Posterior cingulate gyrus (tissue), 11 donors: ENCODE measurements at regions of chr9 and their contacts with region 1.

Region 1: DNA sequence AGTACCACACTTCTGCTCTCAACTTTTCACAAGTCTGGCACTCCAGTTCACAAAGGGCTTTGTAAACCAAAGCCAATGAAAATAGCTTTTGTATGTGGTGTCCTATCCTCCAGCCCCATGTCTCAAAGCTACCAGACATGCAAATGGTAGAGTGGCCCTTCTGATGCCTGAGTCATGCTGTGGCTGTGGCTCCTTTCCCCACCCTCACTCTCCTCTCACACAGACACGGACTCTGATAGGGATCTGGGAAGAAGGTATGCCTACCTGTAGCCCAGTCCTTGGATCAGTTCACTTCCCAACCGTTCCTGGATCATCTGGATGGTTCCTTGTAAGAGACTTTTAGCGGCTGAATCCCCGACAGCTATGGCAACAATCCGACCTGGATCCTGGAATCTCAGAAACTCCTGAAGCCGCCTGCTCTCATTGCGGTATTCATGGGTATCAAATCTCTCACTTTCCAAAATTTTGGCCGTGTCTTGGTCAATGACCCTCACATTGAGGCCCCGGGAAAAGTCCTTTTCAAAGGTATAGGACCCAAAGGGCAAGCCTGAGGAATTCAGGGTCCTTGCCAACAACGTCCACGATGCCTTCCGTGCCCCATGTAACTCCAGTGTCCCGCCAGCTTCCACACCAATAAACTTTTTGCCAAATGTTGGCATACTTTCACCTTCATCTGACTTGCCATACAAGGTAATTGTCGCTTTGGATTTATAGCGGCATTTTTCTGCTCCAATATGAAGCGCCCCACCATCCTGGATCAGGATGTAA is 23.4 kb downstream of the CEMIP2 start:
- DNase-seq: peak in 1 of 10 donors; percentile 55

Region 2: GRCh38 chr9:71706176-71706575 is 38.8 kb before region 1 on chr9:
- intact Hi-C with region 1: loop called (anchors 2 kb)
- DNase-seq: no peak

Region 3: DNA sequence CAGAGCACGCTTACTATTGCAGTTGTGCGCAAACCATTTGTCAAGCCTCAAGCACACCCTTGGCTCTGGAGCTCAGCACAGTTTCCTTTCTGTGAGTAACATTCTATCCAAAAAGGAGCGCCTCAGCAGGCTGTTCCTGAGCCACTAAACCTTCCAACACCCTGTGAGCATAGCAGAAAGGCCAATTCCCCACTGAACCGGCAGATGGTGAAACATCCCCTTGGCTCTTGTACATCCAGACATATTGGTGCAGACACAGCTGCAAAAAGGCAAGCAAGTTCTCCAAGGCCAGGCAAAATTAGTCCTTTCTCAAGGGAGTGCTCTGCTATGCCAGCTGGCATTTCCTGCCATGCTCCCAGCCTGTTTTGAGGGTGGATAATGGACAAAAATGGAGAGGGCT is 67.4 kb after region 1 on chr9:
- intact Hi-C with region 1: no loop called
- DNase-seq: peak in 9 of 10 donors; percentile 23 to 92 (median 60)